H1 (cell line): ENCODE measurements at regions of chr16 and their contacts with region 1.

Region 1: DNA sequence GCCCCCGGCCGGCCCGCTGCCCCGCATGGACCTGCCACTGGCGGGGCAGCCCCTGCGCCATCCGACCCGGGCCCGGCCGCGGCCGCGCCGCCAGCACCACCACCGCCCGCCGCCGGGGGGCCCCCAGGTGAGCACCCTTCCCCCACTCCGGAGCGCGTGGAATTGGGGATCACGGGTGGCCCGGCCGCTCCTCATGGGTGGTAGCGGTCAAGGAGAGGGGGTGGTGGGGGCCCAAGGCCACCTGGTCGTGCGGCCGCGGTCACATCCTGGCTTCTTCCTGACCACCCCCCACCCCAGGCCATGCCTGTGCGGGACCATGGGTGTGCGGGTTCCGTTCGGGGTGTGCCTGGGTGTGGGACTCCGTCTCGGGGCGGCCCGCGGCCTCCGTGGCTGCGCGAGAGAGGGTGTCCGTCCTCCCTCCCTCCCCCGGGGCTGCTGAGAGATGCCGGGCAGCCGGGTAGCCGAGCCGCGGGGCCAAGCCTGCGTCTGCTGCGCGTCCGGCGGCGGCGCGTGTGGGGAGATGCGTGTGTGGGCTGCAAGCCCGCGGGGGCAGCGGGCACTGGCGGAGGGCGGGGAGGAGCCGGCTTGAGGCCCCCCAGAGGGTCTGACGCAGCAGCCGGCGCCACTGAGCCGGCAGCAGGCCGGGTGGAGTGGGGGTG is 6.8 kb downstream of the ACD start:
- DNase-seq: no peak
- H3K4me3 ChIP-seq: peak overlapping the region; percentile 47 to 76 (median 58)
- H3K27ac ChIP-seq: no peak overlapping the region
- H3K4me1 ChIP-seq: peaks cover 0 to 18% (median 5%) of the 10 kb centered on the region in 4 experiments; a peak in 5 of 7 replicates
- H3K27me3 ChIP-seq: peaks cover 0 to 23% (median 17%) of the 10 kb centered on the region in 4 experiments; a peak in 4 of 7 replicates
- CTCF ChIP-seq: peak; percentile 14 to 40 (median 24); a peak in 3 of 4 replicates
- EP300 ChIP-seq: no peak
- POLR2A ChIP-seq: no peak
- RAD21 ChIP-seq: no peak

Region 2: DNA sequence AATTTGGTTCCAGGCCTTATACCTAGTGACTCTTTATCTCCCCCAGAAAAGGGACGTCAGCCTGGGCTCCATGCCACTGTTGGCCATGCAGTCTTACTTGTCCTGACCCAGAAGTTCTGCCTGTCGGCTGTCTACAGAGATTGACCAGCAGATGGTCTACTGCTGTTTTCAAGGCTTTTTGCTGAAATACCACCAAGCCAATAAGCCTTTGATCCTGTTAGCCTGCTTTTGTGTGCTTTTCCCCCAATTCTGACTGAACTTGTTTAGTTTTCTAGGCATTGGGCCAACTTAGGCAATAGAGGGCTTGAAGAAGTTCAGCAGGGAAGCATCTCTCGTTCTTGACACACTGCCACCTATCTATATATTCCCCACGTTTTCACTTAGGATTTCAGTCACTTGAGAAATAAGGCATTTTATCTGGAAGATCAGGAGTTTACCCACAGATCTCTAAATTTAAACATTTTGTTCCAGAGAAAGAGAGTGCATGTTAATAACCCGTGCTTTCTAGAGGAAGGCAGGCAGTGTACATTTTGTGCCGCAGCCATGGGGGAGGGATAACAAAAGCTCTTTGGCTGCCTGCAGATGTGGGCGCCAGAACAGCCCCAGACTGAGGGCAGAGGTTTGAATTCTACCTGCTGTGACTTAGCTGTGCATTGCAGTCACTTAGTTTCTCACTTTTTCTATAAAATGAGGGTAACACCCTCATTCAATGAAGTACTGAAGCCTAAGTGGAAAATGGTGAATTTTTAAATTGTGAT is 20.7 kb before region 1 on chr16:
- CTCF ChIA-PET with region 1: interaction called, 202 read pairs
- POLR2A ChIA-PET with region 1: interaction called, 3 read pairs
- DNase-seq: no peak
- H3K4me3 ChIP-seq: no peak overlapping the region
- H3K27ac ChIP-seq: no peak overlapping the region
- H3K4me1 ChIP-seq: no peaks in the 10 kb centered on the region
- H3K27me3 ChIP-seq: no peaks in the 10 kb centered on the region
- CTCF ChIP-seq: no peak
- EP300 ChIP-seq: no peak
- POLR2A ChIP-seq: no peak
- RAD21 ChIP-seq: no peak

Region 3: DNA sequence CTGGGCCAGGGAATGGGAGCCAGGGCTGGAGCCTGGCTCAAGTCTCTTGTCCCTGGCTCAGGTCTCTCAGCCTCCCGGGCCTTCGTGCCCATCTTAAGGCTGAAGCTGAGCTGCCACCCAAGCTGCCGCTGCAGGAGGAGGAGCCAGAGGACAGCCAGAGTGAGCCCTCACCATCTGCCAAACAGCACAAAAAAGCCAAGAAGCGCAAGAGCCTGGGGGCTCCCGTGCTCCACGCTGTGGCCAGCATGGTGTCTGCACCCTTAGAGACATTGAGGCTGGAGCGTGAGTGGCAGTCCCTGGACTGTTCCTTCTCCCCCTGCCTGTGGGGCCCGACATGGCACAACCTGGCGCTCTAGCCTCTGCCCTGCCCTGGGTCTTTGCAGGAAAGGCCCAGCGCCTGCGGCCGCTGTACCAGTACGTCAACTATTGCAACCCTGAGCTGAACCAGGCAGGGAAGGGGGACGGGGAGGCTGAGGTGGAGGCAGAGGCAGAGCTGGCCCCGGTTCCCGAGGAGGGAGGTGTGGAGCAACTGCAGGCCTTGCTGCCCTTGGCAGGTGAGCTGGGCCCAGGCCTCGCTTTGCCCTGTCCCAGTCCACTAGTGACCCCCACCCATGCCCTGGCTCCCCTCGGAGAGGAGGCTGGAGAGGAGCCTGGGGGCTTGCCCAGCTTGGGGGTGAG is 14.7 kb after region 1 on chr16:
- CTCF ChIA-PET with region 1: interaction called, 202 read pairs
- POLR2A ChIA-PET with region 1: interaction called, 4 read pairs
- DNase-seq: peak; percentile 81 to 82
- H3K4me3 ChIP-seq: no peak overlapping the region; a peak in 1 of 8 replicates
- H3K27ac ChIP-seq: no peak overlapping the region
- H3K4me1 ChIP-seq: peaks cover 0 to 25% (median 15%) of the 10 kb centered on the region in 4 experiments; a peak in 5 of 7 replicates
- H3K27me3 ChIP-seq: peaks cover 0 to 3% (median 0%) of the 10 kb centered on the region in 4 experiments; a peak in 2 of 7 replicates
- CTCF ChIP-seq: peak in 2 of 3 experiments; percentile 87 to 96; a peak in 3 of 4 replicates
- EP300 ChIP-seq: no peak
- POLR2A ChIP-seq: no peak
- RAD21 ChIP-seq: peak; percentile 50 to 68

Region 4: GRCh38 chr16:67741118-67741517 is 87.9 kb after region 1 on chr16:
- CTCF ChIA-PET with region 1: no interaction called
- POLR2A ChIA-PET with region 1: no interaction called
- DNase-seq: no peak
- H3K4me3 ChIP-seq: no peak overlapping the region
- H3K27ac ChIP-seq: no peak overlapping the region
- H3K4me1 ChIP-seq: no peaks in the 10 kb centered on the region
- H3K27me3 ChIP-seq: no peaks in the 10 kb centered on the region
- CTCF ChIP-seq: no peak
- EP300 ChIP-seq: no peak
- POLR2A ChIP-seq: no peak
- RAD21 ChIP-seq: no peak